ENCODE measurements at regions of chrX and their contacts with region 1.

Region 1: DNA sequence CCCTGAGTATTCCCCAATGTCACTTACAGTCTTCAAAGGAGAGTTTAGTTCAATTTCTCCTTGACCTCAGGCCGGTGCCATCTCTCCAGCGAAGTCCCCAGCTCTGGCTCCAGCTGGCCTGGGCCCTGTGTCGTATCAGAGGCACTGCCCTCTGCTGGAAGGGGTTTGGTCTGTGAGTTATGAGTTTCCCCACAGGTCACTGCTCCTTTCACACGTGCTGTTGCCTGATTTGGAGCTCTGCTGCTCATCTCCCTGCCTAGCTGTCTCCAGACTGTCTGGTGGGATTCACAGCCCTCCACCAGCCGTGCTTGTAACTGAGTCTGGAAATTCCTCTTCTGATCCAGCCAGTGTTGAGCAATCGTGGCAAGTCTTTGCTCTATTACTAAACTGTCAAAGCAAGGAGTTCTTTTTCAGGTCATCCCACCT is at the start of gene RAP2C:
- DNase-seq: peak; percentile 74 to 75
- H3K4me3 ChIP-seq: peak within 1 kb of the TSS; percentile 80
- H3K4me3 Mint-ChIP-seq: peak within 1 kb of the TSS; percentile 86
- H3K27ac Mint-ChIP-seq: peak within 1 kb of the TSS; percentile 81
- H3K4me1 ChIP-seq: no peaks in the 10 kb centered on the region
- H3K4me1 Mint-ChIP-seq: peaks cover 5% of the 10 kb centered on the region
- H3K27me3 ChIP-seq: no peaks in the 10 kb centered on the region
- H3K27me3 Mint-ChIP-seq: no peaks in the 10 kb centered on the region
- CTCF ChIP-seq: peak; percentile 41 to 62
- total RNA-seq, gene RAP2C: 24.9 and 26.6 TPM in 2 replicates

Region 2: GRCh38 chrX:131841496-131842410 is 377.6 kb before region 1 on chrX:
- CTCF ChIA-PET with region 1: interaction called, 6 read pairs
- POLR2A ChIA-PET with region 1: no interaction called
- intact Hi-C with region 1: loop called (anchors 2 kb)
- DNase-seq: peak; percentile 56 to 66
- H3K4me3 ChIP-seq: no peak overlapping the region
- H3K4me3 Mint-ChIP-seq: no peak overlapping the region
- H3K27ac Mint-ChIP-seq: no peak overlapping the region
- H3K4me1 ChIP-seq: 0 out of 2 replicates have a peak, but pooled peaks cover 4% of the 10 kb centered on the region
- H3K4me1 Mint-ChIP-seq: no peaks in the 10 kb centered on the region
- H3K27me3 ChIP-seq: no peaks in the 10 kb centered on the region
- H3K27me3 Mint-ChIP-seq: no peaks in the 10 kb centered on the region
- CTCF ChIP-seq: peak; percentile 59 to 70

Region 3: DNA sequence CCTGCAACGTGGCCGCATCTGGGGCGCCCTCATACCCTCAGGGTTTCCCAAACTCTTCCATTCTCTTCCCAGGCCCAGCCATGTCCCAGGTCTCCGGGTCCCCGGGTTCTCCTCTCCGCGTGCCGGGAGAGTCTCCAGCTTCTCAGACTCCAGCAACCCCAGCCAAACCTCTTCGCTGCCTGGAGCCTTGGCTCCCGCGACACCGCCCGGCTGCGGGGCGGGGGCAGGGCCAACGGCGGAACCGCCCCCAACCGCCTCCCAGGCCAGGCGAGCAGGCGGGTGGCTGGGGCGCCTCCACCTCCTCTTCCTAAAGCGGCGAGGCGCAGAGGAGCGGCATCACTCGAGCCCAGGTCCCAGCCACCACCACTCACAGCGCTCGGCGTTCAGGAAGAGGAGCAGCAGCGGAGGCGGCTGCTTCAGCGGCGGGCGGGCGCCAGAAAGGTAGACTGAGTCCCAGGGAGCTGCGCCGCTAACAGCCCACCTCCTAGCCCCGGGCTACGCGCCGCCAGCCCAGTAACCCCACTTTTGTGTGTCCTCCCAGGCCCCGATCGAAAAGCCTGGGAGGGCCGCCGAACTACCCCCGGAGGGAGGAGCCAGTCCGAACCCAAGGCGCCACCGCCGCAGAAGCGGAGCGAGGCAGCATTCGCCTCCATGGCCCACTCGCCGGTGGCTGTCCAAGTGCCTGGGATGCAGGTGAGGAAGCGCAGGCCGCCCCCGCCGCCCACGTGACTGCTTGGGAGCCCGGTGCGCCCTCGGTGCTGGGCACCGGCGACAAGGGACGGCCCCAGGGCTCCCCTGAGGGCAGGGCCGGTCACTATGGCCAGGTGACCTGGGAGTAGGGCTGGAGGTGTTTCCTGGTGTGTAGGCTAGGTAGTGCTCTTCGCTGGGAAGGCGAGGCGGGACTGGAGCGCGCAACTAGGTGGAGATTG is 196.1 kb before region 1 on chrX and contains the start of gene STK26:
- CTCF ChIA-PET with region 1: no interaction called
- POLR2A ChIA-PET with region 1: no interaction called
- intact Hi-C with region 1: loop called (anchors 2 kb)
- DNase-seq: peak; percentile 79 to 86
- H3K4me3 ChIP-seq: peak within 1 kb of the TSS; percentile 79
- H3K4me3 Mint-ChIP-seq: peak within 1 kb of the TSS; percentile 88
- H3K27ac Mint-ChIP-seq: peak within 1 kb of the TSS; percentile 89
- H3K4me1 ChIP-seq: peaks cover 3% of the 10 kb centered on the region; the same call in 1 of the 2 replicates
- H3K4me1 Mint-ChIP-seq: peaks cover 13% of the 10 kb centered on the region
- H3K27me3 ChIP-seq: no peaks in the 10 kb centered on the region
- H3K27me3 Mint-ChIP-seq: no peaks in the 10 kb centered on the region
- CTCF ChIP-seq: no peak
- total RNA-seq, gene STK26: 36.8 and 37.1 TPM in 2 replicates

Region 4: GRCh38 chrX:132092439-132093065 is 126.8 kb before region 1 on chrX:
- CTCF ChIA-PET with region 1: interaction called, 67 read pairs
- POLR2A ChIA-PET with region 1: interaction called, 4 read pairs
- intact Hi-C with region 1: loop called (anchors 1 kb)
- DNase-seq: peak; percentile 47 to 57
- H3K4me3 ChIP-seq: no peak overlapping the region
- H3K4me3 Mint-ChIP-seq: no peak overlapping the region
- H3K27ac Mint-ChIP-seq: no peak overlapping the region
- H3K4me1 ChIP-seq: no peaks in the 10 kb centered on the region; the same call in 1 of the 2 replicates
- H3K4me1 Mint-ChIP-seq: peaks cover 6% of the 10 kb centered on the region
- H3K27me3 ChIP-seq: no peaks in the 10 kb centered on the region
- H3K27me3 Mint-ChIP-seq: no peaks in the 10 kb centered on the region
- CTCF ChIP-seq: peak; percentile 62 to 65

Region 5: DNA sequence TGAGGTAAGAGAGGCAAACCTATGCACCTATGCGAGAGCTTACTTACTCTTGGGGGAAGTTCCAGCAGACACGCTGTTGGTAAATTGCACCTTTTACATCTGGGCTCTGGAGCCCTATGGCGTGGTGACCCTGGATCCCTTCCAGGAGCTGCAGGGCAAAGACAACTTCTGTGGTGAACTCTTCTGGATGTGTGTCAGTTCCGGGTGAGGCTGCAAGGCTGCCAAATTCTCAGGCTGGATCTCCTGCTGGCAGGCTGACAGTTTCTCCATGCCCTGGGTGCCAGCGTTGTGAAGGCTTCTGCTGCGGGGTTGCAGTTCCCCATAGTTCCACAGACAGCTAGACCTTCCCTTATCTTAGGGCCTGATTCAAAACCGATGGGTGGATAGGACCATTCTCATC is 38.0 kb before region 1 on chrX:
- CTCF ChIA-PET with region 1: no interaction called
- POLR2A ChIA-PET with region 1: no interaction called
- intact Hi-C with region 1: loop called (anchors 5 kb)
- DNase-seq: no peak
- H3K4me3 ChIP-seq: no peak overlapping the region
- H3K4me3 Mint-ChIP-seq: no peak overlapping the region
- H3K27ac Mint-ChIP-seq: no peak overlapping the region
- H3K4me1 ChIP-seq: peaks cover 10% of the 10 kb centered on the region; the same call in 1 of the 2 replicates
- H3K4me1 Mint-ChIP-seq: peaks cover 11% of the 10 kb centered on the region
- H3K27me3 ChIP-seq: no peaks in the 10 kb centered on the region
- H3K27me3 Mint-ChIP-seq: no peaks in the 10 kb centered on the region
- CTCF ChIP-seq: no peak

Region 6: DNA sequence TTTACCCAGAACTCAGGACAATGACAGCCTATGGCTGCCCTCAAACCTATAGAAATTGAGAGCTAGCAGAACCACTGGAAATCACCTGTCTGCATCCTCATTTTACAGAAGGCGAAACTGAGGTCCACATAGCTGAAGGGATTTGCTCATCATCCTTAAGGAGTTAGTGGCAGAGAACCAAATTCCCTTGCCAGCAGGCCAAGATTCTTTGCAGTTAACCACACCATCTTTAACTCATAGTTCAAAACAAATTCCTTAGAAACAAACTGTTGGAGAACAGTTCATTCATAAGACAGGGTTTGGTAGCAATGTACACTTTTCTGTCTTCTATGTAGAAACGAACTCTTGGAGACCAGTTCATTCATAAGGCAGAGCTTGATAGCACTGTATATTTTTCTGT is 37.8 kb after region 1 on chrX:
- CTCF ChIA-PET with region 1: no interaction called
- POLR2A ChIA-PET with region 1: no interaction called
- intact Hi-C with region 1: no loop called
- DNase-seq: no peak
- H3K4me3 ChIP-seq: no peak overlapping the region
- H3K4me3 Mint-ChIP-seq: no peak overlapping the region
- H3K27ac Mint-ChIP-seq: no peak overlapping the region
- H3K4me1 ChIP-seq: no peaks in the 10 kb centered on the region
- H3K4me1 Mint-ChIP-seq: peaks cover 6% of the 10 kb centered on the region
- H3K27me3 ChIP-seq: no peaks in the 10 kb centered on the region
- H3K27me3 Mint-ChIP-seq: no peaks in the 10 kb centered on the region
- CTCF ChIP-seq: no peak

Region 7: DNA sequence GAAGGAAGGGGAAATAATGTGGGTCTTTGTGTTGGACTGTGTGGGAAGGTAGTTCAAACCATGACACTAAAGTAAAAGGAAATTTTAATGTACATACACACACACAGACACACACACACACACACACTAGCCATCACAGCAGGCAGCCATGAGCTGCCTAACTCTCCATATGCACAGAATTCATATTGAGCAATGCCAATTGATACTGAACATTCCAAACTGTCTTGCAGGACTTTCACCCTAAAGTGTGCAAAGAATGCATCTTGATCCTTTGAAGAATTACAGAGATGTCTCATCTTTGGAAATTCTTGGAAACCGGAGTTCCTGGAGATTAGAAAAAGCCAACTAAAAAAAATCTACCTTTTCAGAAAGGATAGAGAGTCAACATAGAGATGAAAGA is 390.0 kb after region 1 on chrX:
- CTCF ChIA-PET with region 1: no interaction called
- POLR2A ChIA-PET with region 1: no interaction called
- intact Hi-C with region 1: no loop called
- DNase-seq: peak; percentile 34 to 40
- H3K4me3 ChIP-seq: no peak overlapping the region
- H3K4me3 Mint-ChIP-seq: no peak overlapping the region
- H3K27ac Mint-ChIP-seq: peak overlapping the region; percentile 51
- H3K4me1 ChIP-seq: peaks cover 36% of the 10 kb centered on the region
- H3K4me1 Mint-ChIP-seq: peaks cover 23% of the 10 kb centered on the region
- H3K27me3 ChIP-seq: no peaks in the 10 kb centered on the region
- H3K27me3 Mint-ChIP-seq: no peaks in the 10 kb centered on the region
- CTCF ChIP-seq: no peak

Measured in Caco-2 (cell line).